ENCODE measurements at regions of chr17 and their contacts with region 1.

Region 1: DNA sequence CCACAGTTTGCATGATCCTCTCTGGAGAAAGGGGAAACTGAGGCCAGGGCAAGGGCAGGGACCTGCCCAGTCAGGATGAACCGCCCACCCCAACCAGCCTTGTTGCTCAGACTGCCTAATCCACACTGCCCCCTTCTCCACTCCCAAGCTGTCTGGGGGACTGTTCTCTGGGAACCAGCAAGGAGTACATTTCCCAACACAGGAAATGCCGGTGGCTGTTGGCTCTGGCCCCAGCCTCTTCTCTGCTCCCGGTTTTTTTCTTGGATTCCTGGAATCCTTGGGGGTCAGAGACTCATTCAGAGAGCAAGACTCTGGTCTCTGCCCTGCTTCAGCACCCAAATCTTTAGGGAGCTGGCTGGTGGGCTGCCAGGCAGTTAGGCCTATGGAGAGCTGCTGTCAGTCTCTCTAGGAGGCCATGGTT is 10.8 kb upstream of the MTMR4 start:
- DNase-seq: peak in 1 of 10 donors; percentile 83

Region 2: DNA sequence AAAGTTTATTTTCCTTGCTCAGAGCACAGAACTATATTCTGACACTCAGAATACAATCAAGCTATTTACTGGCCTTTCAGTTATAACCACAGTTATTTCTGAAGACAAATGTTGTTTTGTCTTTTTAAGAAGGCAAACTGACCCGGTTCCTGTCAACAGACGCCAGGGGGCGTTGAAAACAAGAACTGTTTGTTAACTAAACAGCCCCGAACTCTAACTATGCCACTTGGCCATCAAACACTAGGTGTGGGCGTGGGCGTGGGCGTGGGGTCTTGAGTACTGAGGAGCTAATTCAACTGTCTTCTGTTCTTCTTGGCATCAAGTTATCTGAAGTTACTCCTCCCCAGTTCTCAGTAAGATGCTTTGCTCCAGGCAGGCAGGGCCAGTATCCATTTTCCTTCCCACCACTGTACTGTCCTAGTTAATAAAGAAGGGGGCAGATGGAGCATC is 52.5 kb after region 1 on chr17:
- intact Hi-C with region 1: loop called (anchors 5 kb)
- DNase-seq: peak in 9 of 10 donors; percentile 30 to 93 (median 70)

Region 3: GRCh38 chr17:58692239-58693055 is 167.3 kb after region 1 on chr17 and contains the start of gene RAD51C:
- intact Hi-C with region 1: no loop called
- DNase-seq: peak; percentile 71 to 98 (median 86)

Region 4: GRCh38 chr17:58900171-58900907 is 375.1 kb after region 1 on chr17:
- intact Hi-C with region 1: no loop called
- DNase-seq: no peak